ENCODE measurements at regions of chr2 and their contacts with region 1.

Region 1: GRCh38 chr2:105487142-105488069 is 88.6 kb upstream of the FHL2 start:
- DNase-seq: peak; percentile 34
- ATAC-seq: peak; percentile 43 to 53

Region 2: GRCh38 chr2:104919127-104919526 is 568.3 kb before region 1 on chr2:
- intact Hi-C with region 1: no loop called
- DNase-seq: no peak
- ATAC-seq: no peak

Region 3: GRCh38 chr2:105248316-105249070 is 238.9 kb before region 1 on chr2:
- intact Hi-C with region 1: no loop called
- DNase-seq: no peak
- ATAC-seq: peak in 1 of 2 donors; percentile 12

Region 4: GRCh38 chr2:105398699-105399432 is 88.5 kb before region 1 on chr2 and contains the start of gene FHL2:
- intact Hi-C with region 1: no loop called
- DNase-seq: peak; percentile 78
- ATAC-seq: peak; percentile 95 to 96
- total RNA-seq, gene FHL2: 32.3 to 92.2 TPM

Region 5: DNA sequence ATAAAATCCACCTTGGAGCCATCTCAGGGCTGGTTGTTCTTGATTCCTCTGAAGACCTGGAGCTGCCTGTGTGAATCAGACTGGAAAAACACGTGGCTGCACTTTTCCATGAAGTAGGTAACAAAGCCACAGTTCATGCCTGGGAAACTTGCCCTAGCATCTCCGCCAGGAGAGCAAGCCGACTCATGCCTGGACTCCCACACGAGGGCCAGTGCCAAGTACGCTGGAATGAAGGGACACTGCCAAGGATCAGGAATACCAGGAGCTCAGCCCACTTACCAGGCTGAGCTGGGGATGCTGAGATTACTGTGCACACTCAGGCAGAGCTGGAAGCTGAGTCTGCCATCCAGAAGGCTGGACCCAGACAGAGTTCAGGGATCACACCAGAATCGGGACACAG is 77.7 kb before region 1 on chr2:
- intact Hi-C with region 1: loop called in 1 of 2 experiments (anchors 5 kb)
- DNase-seq: peak; percentile 89
- ATAC-seq: peak; percentile 94 to 96

Region 6: DNA sequence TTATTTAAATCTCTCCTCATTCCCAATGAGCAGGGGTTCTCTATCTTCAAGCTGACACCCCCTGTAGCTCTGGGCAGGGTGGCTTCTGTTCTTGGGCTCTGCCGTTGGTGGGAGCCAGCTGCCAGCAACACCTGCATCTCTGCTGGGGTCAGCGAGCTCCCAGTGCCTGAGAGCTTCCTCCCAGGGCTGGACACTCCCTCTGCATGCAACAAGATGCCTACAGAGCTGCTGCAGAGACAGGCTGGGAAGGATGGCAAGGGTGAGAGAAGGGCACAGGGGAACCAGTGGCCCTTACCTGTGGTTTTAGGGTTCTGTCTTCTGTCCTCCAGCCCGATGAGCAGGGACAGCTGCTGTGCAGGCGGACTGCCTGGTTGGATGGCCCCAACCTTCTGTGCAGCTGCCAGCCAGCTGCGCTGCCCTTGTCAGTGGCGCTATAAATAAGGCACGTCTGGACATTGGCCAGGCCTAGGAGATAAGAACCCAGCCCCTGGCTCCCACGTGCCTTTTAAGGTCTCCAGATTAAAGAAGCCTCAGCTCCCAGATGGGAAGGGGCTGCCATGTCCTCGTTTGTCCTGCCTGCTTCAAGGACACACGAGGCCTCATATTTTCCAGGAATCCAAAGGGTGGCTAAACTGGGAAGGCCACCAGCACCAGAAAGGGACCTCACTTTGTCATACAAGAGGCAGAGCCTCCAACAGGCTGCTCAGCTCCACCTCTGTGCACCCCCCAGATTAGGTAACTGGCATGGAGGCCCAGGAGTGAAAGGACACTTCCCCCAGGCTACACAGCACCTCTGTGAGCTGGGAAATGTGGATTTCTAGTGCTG is 49.1 kb before region 1 on chr2:
- intact Hi-C with region 1: loop called in 1 of 2 experiments (anchors 5 kb)
- DNase-seq: peak; percentile 73
- ATAC-seq: peak; percentile 94 to 95

Region 7: GRCh38 chr2:105858868-105859693 is 371.7 kb after region 1 on chr2:
- intact Hi-C with region 1: no loop called
- DNase-seq: no peak
- ATAC-seq: no peak

Measured in left cardiac atrium (tissue), 4 donors.